ENCODE measurements at regions of chr18 and their contacts with region 1.

Region 1: GRCh38 chr18:26090130-26091046 is at the start of gene SS18:
- DNase-seq: peak; percentile 83 to 98 (median 90)

Region 2: GRCh38 chr18:26040051-26040656 is 50.2 kb before region 1 on chr18:
- intact Hi-C with region 1: no loop called
- DNase-seq: no peak

Region 3: DNA sequence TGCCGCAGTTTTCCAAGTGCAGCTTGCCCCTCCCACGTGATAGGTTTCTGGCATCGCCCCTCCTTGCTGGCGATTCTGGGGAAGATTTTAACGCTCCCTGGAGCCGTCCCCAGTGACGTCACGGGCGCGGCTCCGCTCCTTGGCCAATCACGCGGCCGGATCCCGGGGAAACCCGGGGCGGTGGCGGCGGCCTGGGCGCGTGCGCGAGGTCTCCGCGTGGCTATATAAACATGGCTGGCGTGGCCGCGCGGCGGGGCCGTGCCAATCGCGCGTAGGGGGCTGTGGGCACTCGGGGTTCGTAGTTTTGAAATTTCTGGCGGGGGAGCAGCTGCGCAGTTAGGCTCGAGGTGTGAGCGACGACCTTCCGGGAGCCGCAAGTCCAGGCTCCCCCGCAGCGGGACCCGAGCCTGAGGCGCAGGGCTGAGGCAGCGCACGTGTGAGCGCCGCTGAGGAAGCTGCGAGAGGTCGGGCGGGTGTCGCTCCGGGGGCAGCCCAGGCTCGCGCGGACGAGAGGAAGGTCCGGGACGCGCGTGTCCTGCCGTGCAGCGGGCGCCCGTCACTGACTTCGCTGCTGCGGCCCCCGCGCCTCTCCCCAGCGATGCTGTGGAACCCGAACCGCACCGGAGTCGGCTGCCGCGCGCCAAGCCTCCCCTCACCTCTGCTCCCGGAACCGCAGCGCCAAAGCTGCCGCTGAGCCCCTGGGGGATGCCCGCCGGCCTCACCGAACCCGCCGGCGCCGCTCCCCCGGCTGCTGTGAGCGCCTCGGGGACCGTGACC is 136.0 kb after region 1 on chr18 and contains the start of gene TAF4B:
- intact Hi-C with region 1: loop called (anchors 2 kb)
- DNase-seq: peak; percentile 88 to 99 (median 94)

Measured in posterior cingulate gyrus (tissue), 11 donors.